ENCODE measurements at regions of chr13 and their contacts with region 1.

Region 1: GRCh38 chr13:23321535-23322241 is 111.8 kb downstream of the SACS start:
- DNase-seq: peak; percentile 50 to 72
- ATAC-seq: peak; percentile 86 to 93
- H3K4me3 ChIP-seq: no peak overlapping the region
- H3K27ac ChIP-seq: peak overlapping the region; percentile 43 to 76 (median 52)
- H3K4me1 ChIP-seq: peaks cover 43 to 49% of the 10 kb centered on the region in 2 donors
- H3K27me3 ChIP-seq: no peaks in the 10 kb centered on the region
- CTCF ChIP-seq: no peak
- POLR2A ChIP-seq: no peak

Region 2: DNA sequence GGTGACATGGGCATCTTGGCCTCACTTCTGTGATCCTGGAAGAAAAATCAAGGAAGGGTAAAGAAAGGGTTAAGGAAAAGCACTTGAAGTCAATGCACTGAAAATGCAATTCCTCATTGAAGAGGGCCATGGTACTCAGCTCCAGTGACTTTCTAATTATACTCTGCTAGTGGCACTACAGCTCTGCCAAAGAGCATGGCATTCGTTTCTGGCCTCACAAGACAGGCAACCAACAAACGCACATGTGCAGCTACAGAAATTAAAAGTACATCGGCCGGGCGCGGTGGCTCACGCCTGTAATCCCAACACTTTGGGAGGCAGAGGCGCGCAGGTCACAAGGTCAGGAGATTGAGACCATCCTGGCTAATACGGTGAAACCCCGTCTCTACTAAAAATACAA is 90.0 kb after region 1 on chr13:
- in situ Hi-C with region 1: no loop called
- intact Hi-C with region 1: loop called (anchors 1 kb)
- DNase-seq: peak; percentile 56 to 67
- ATAC-seq: peak; percentile 95 to 96
- H3K4me3 ChIP-seq: peak overlapping the region; percentile 30 to 43 (median 36)
- H3K27ac ChIP-seq: peak overlapping the region; percentile 78 to 84 (median 82)
- H3K4me1 ChIP-seq: peaks cover 8 to 24% of the 10 kb centered on the region in 2 donors
- H3K27me3 ChIP-seq: no peaks in the 10 kb centered on the region
- CTCF ChIP-seq: no peak
- POLR2A ChIP-seq: no peak